ENCODE measurements at regions of chr1 and their contacts with region 1.

Region 1: GRCh38 chr1:43650310-43651085 is 549 bp downstream of the KDM4A start:
- DNase-seq: peak; percentile 96

Region 2: DNA sequence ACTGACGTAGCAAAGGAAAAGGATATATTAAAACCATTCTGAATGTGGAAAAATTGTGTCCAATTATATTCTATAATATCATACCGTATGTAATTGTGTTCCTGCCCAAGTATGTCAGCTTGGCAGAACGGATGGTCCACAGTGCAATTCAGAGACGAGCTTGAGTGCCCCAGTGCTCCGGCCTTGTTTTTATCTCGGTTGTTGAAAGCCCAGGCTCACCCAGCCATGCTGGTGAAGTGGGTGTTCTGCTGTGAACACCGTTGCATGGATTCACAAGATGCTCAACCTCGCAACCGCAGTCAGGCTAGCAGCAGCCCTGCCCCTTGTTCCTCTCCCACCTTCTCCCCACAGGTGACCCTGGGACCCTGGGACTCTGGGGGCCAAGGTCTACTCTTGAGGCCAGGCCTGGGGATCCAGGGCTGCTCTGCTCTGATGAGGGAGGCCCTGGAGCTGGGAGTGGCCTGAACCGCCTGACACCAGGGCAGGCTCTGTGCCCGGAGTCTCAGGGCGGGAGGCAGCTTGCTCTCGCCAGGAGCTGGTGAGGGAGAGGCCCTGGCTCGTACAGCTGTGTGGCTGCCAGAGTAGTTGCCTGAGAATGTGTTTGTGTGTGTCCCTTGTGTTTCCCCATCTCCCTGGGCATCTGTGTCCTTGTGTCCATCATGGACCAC is 108.6 kb before region 1 on chr1:
- intact Hi-C with region 1: loop called (anchors 5 kb)
- DNase-seq: peak; percentile 87

Region 3: GRCh38 chr1:43565600-43566360 is 84.7 kb before region 1 on chr1:
- intact Hi-C with region 1: loop called (anchors 5 kb)
- DNase-seq: peak; percentile 79

Region 4: DNA sequence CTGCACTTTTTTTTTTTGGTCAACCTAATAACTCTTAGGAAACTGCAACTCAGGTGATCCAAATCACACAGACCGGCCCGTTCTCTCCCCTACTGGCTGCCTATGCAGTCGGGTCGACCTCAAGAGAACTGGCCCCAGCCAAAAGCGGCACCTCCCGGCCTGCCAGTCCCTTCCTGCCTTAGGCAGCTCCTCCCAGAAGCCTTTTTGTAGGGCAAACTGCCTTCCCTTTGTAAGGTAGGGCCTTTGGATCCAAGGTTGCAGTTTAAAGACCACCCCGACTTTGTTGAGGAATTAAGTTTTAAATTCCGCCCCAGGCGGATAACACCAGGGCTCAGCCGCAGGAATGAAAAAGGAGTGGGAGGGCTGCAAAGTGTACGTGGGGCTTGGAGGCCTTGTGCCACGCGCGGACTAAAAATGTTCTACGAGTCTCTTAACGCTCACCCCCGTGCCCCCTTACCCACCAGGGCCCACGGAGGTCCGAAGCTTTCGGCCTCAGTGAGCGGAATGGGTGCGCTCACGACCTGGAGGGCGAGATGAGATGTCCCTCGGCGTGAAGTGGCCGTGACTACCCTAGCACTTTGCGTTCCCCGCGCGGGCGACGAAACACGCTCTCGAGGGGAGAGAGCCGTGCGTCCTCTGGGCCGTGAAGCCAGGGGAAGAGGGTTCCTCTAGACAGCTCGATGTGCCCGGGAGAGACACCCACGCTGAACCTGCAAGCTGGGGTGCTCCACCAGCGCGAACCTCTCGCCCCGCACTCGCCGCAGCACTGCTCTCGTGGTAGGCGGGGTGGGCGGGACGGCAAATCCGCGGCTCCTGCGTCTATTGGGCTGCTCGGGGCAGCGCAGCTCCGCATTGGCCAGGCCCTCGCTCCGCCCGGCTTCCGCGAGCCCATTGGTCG is 56.3 kb after region 1 on chr1:
- intact Hi-C with region 1: loop called (anchors 5 kb)
- DNase-seq: peak; percentile 96

Region 5: DNA sequence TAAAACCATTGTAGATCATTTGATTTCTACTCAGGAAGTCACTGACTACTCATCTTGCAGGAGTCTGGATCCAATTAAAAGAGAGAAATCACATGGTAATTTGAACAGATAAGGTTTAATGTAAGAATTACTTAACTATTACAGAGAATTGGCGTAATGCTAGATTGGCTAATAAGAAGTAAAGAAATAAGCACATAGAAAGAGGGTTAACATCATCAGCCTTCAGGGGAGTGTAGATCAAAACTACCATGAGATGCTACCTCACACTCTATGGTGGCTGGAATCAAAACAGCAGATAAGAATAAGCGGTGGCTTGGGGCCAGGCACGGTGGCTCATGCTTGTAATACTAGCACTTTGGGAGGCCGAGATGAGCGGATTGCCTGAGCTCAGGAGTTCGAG is 68.6 kb after region 1 on chr1:
- intact Hi-C with region 1: no loop called
- DNase-seq: no peak

Region 6: DNA sequence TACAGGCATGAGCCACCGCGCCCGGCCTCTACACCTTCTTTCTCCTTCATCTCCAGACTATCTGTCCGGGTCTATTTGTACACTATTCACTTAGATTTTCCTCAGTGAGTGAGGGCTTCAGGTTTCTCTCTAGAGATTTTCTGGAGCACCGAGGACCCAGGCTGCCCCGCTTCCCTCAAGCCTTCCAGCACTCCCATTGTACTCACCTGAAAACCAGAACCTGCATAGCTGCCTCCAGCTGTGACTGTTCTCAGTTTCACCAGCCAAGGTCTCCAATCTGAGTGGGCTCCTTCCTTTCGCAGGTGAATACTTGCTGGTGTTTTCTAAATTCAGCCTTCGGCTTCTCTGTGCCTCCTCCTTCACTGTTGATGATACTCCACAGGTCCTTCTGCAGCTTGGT is 549.8 kb after region 1 on chr1:
- intact Hi-C with region 1: no loop called
- DNase-seq: no peak